Caco-2 (cell line): ENCODE measurements at regions of chr13 and their contacts with region 1.

Region 1: GRCh38 chr13:44577236-44578066 is 1.3 kb upstream of the TSC22D1 start:
- DNase-seq: peak; percentile 99
- H3K4me3 ChIP-seq: peak overlapping the region; percentile 99
- H3K4me3 Mint-ChIP-seq: peak overlapping the region; percentile 74
- H3K27ac Mint-ChIP-seq: peak overlapping the region; percentile 85
- H3K4me1 ChIP-seq: peaks cover 28% of the 10 kb centered on the region
- H3K4me1 Mint-ChIP-seq: peaks cover 28% of the 10 kb centered on the region
- H3K27me3 ChIP-seq: no peaks in the 10 kb centered on the region
- H3K27me3 Mint-ChIP-seq: no peaks in the 10 kb centered on the region
- CTCF ChIP-seq: no peak

Region 2: DNA sequence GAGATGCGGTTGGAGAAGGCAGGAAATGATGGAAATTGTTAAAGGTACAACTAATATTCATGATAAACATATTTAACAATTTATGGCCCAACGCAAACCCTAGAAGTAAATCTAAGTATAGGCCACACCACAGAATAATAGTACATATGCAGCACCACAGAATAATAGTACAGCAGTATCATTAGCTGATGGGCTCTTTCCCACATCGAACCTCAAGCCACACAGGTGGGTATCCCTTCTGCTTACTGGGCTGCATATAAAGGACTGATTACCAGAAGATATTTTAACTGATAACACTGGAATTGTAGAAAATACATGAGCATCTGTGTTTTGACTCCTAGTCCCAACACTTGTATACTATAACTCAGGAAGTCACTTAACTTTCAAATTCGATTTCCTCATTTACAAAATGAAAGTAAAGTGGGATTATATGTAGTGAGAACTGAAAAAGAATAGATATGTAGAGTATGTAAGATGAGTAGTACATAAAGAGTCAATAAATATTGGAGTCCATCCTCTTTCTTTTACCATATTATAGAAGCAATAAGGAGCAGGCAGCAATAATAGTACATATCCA is 92.8 kb before region 1 on chr13:
- CTCF ChIA-PET with region 1: interaction called, 3 read pairs
- POLR2A ChIA-PET with region 1: no interaction called
- intact Hi-C with region 1: loop called (anchors 2 kb)
- DNase-seq: no peak
- H3K4me3 ChIP-seq: no peak overlapping the region
- H3K4me3 Mint-ChIP-seq: no peak overlapping the region
- H3K27ac Mint-ChIP-seq: no peak overlapping the region
- H3K4me1 ChIP-seq: no peaks in the 10 kb centered on the region
- H3K4me1 Mint-ChIP-seq: peaks cover 8% of the 10 kb centered on the region
- H3K27me3 ChIP-seq: no peaks in the 10 kb centered on the region
- H3K27me3 Mint-ChIP-seq: no peaks in the 10 kb centered on the region
- CTCF ChIP-seq: no peak

Region 3: DNA sequence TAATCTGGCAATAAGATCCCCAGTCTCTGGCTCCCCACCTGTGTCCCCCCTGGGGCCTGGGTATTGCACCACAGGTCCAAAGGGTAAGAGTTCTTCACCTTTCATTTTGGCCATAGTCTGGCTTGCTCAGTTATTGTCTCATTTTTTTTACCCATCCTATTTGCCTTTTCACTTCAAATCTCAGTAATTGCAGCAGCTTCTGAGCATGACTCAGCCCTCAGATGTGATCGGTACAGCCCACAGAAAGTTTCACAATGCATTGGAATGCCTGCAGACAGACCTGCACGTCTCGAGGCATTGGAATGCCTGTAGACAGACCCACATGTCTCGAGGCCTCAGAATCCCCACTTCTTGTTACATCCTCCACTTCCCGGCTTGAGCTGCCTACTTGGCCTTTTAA is 238.2 kb after region 1 on chr13:
- CTCF ChIA-PET with region 1: no interaction called
- POLR2A ChIA-PET with region 1: no interaction called
- intact Hi-C with region 1: loop called (anchors 1 kb)
- DNase-seq: peak; percentile 90 to 96
- H3K4me3 ChIP-seq: no peak overlapping the region
- H3K4me3 Mint-ChIP-seq: peak overlapping the region; percentile 1
- H3K27ac Mint-ChIP-seq: peak overlapping the region; percentile 76
- H3K4me1 ChIP-seq: peaks cover 86% of the 10 kb centered on the region
- H3K4me1 Mint-ChIP-seq: peaks cover 77% of the 10 kb centered on the region
- H3K27me3 ChIP-seq: no peaks in the 10 kb centered on the region
- H3K27me3 Mint-ChIP-seq: no peaks in the 10 kb centered on the region
- CTCF ChIP-seq: no peak

Region 4: GRCh38 chr13:44917589-44918325 is 340.3 kb after region 1 on chr13:
- CTCF ChIA-PET with region 1: interaction called, 3 read pairs
- POLR2A ChIA-PET with region 1: no interaction called
- intact Hi-C with region 1: loop called (anchors 2 kb)
- DNase-seq: peak; percentile 96 to 97
- H3K4me3 ChIP-seq: peak overlapping the region; percentile 61
- H3K4me3 Mint-ChIP-seq: no peak overlapping the region
- H3K27ac Mint-ChIP-seq: no peak overlapping the region
- H3K4me1 ChIP-seq: peaks cover 7% of the 10 kb centered on the region; the same call in 1 of the 2 replicates
- H3K4me1 Mint-ChIP-seq: no peaks in the 10 kb centered on the region
- H3K27me3 ChIP-seq: no peaks in the 10 kb centered on the region
- H3K27me3 Mint-ChIP-seq: no peaks in the 10 kb centered on the region
- CTCF ChIP-seq: peak; percentile 40 to 75

Region 5: GRCh38 chr13:44988973-44989817 is 411.7 kb after region 1 on chr13 and contains the starts of genes GPALPP1 and NUFIP1:
- CTCF ChIA-PET with region 1: no interaction called
- POLR2A ChIA-PET with region 1: no interaction called
- intact Hi-C with region 1: loop called (anchors 1 kb)
- DNase-seq: peak; percentile 95 to 96
- H3K4me3 ChIP-seq: peak within 1 kb of the TSS; percentile 100
- H3K4me3 Mint-ChIP-seq: peak within 1 kb of the TSS; percentile 91
- H3K27ac Mint-ChIP-seq: peak within 1 kb of the TSS; percentile 99
- H3K4me1 ChIP-seq: peaks cover 12% of the 10 kb centered on the region
- H3K4me1 Mint-ChIP-seq: peaks cover 16% of the 10 kb centered on the region
- H3K27me3 ChIP-seq: no peaks in the 10 kb centered on the region
- H3K27me3 Mint-ChIP-seq: no peaks in the 10 kb centered on the region
- CTCF ChIP-seq: no peak
- total RNA-seq, gene GPALPP1: 32.2 and 36.2 TPM in 2 replicates
- total RNA-seq, gene NUFIP1: 15.2 and 15.4 TPM in 2 replicates